ENCODE measurements at regions of chr5 and their contacts with region 1.

Region 1: DNA sequence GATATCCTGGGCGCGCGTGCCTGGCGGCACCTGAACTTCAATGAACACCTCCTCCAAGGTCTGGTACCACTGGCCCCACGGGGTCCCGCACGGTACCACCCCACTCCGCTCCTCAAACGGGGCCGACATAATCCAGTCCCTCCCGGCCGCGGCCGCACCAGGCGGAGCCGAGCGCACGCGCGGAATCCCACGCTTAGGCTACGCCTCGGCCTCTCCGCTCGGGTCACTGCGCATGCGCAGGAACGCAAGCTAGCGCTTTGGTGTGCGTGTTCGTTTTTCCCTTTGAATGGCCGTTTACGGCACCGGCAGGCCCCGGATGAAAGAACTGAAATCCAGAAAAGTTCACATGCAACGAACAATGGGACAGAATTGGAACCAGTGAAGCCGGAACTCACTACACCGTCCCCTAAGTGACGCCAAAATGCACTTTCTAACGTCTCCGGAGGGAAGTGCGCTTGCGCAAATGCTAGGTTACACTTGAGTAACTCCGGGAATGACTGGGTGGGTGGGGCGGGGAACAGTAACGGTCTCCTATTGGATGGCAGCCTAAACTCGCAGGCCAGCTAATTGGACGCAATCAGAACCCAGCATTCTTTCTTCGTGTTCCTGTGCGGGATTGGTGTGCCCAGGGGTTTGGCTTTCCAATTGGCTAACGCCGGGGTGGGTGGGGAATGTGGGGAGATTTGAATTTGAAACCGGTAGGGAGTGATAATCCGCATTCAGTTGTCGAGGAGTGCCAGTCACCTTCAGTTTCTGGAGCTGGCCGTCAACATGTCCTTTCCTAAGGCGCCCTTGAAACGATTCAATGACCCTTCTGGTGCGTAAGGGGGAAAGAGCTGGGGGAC is at the starts of genes HMMR and NUDCD2:
- DNase-seq: peak; percentile 96 to 98 (median 98)
- H3K4me3 ChIP-seq: peak within 1 kb of the TSS; percentile 76 to 98 (median 92)
- H3K4me3 Mint-ChIP-seq: peak within 1 kb of the TSS; percentile 92 to 96
- H3K27ac ChIP-seq: peak within 1 kb of the TSS; percentile 94 to 99
- H3K27ac Mint-ChIP-seq: peak within 1 kb of the TSS; percentile 97 to 100 (median 99)
- H3K4me1 ChIP-seq: peaks cover 24 to 33% of the 10 kb centered on the region in 2 donors
- H3K4me1 Mint-ChIP-seq: peaks cover 30% of the 10 kb centered on the region
- H3K27me3 ChIP-seq: no peaks in the 10 kb centered on the region
- H3K27me3 Mint-ChIP-seq: peaks cover 0 to 4% (median 0%) of the 10 kb centered on the region in 3 donors
- CTCF ChIP-seq: no peak
- polyA plus RNA-seq, gene HMMR: 0.29 TPM in 1 of 3 donors, not detected in the others
- polyA plus RNA-seq, gene NUDCD2: 3.4 to 23.6 (median 22.0) TPM

Region 2: DNA sequence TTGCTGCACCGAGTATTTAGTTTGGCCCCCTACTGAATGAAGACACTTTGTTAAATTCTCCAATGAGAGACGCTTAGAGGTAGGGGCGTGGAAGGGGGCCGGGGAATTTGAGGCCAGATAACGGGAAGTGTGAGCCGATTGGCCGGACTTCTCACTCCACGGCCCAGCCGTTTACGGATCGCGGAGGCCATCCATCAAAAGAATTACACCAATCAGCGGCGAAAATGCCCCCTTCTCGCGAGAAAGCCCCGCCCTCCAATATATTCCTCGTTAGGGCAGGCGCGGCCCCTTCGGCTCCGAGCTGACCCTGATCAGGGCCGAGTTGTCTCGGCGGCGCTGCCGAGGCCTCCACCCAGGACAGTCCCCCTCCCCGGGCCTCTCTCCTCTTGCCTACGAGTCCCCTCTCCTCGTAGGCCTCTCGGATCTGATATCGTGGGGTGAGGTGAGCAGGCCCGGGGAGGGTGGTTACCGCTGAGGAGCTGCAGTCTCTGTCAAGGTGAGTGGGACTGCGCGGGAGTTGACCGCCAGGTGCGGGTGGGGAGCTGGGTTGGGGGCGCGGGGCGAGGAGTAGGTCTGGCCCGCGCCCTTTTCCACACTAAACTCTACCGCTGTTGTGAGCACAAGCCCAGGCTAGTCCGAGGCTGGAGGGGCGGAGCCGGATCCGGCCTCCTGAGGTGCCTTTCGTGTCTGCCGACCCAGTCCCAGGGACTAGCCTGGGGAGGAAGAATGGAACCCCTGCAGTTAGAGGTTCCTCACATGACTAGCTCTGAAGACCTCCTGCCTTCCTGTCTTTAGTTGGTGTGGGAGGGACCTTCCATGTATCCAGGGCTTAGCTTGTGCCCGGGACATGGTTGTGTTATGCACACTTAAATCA is 22.6 kb before region 1 on chr5 and contains the start of gene CCNG1:
- intact Hi-C with region 1: loop called in 1 of 2 experiments (anchors 2 kb)
- DNase-seq: peak; percentile 90 to 95 (median 94)
- H3K4me3 ChIP-seq: peak within 1 kb of the TSS; percentile 49 to 94 (median 86)
- H3K4me3 Mint-ChIP-seq: peak within 1 kb of the TSS; percentile 85 to 91
- H3K27ac ChIP-seq: peak within 1 kb of the TSS; percentile 68 to 92
- H3K27ac Mint-ChIP-seq: peak within 1 kb of the TSS; percentile 80 to 92 (median 89)
- H3K4me1 ChIP-seq: peaks cover 17 to 28% of the 10 kb centered on the region in 2 donors
- H3K4me1 Mint-ChIP-seq: peaks cover 27% of the 10 kb centered on the region
- H3K27me3 ChIP-seq: no peaks in the 10 kb centered on the region
- H3K27me3 Mint-ChIP-seq: no peaks in the 10 kb centered on the region
- CTCF ChIP-seq: no peak
- polyA plus RNA-seq, gene CCNG1: 13.1 to 48.9 (median 46.0) TPM

Region 3: GRCh38 chr5:163447875-163448274 is 12.3 kb before region 1 on chr5:
- intact Hi-C with region 1: no loop called
- DNase-seq: no peak
- H3K4me3 ChIP-seq: no peak overlapping the region
- H3K4me3 Mint-ChIP-seq: no peak overlapping the region
- H3K27ac ChIP-seq: no peak overlapping the region
- H3K27ac Mint-ChIP-seq: peak overlapping the region in 1 of 7 donors; percentile 86
- H3K4me1 ChIP-seq: no peaks in the 10 kb centered on the region
- H3K4me1 Mint-ChIP-seq: no peaks in the 10 kb centered on the region
- H3K27me3 ChIP-seq: no peaks in the 10 kb centered on the region
- H3K27me3 Mint-ChIP-seq: no peaks in the 10 kb centered on the region
- CTCF ChIP-seq: no peak

Region 4: DNA sequence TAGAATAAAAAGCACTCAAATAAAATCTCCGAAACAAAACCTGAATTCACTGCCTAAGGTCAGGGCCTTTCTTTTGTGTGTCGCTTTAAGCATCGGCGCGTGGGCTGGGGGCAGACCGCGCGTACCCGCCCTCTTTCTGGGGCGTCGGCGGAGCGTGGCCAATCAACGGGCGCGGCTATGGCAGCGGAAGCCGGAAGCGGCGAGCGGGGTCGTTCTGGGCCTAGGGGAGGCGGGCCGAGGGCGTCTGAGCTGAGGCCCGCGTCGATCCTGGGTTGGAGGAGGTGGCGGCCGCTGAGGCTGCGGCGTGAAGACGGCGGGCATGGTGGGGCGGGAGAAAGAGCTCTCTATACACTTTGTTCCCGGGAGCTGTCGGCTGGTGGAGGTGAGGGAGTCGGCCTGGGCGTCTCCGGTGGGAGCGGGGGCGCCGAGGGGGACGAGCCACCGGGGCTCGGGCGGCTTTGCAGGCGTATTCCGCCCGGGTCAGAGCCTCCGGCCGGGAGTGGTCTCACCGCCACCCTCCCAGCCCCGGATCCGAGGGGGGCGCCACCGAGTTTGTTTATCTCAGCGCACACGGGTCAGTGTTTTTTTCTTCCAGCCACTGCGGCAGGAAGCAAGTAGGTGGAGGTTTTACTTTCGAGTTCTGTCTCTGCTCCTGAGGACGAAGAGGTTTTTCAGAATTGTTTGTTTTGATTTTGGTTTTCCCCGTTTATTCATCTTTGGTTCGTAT is 45.4 kb after region 1 on chr5 and contains the start of gene MAT2B:
- intact Hi-C with region 1: loop called (anchors 2 kb)
- DNase-seq: peak; percentile 90 to 91 (median 91)
- H3K4me3 ChIP-seq: peak within 1 kb of the TSS; percentile 62 to 99 (median 97)
- H3K4me3 Mint-ChIP-seq: peak within 1 kb of the TSS; percentile 89 to 97
- H3K27ac ChIP-seq: peak within 1 kb of the TSS; percentile 89 to 96
- H3K27ac Mint-ChIP-seq: peak within 1 kb of the TSS; percentile 94 to 99 (median 97)
- H3K4me1 ChIP-seq: peaks cover 39 to 62% of the 10 kb centered on the region in 2 donors
- H3K4me1 Mint-ChIP-seq: peaks cover 58% of the 10 kb centered on the region
- H3K27me3 ChIP-seq: no peaks in the 10 kb centered on the region
- H3K27me3 Mint-ChIP-seq: peaks cover 0 to 2% (median 0%) of the 10 kb centered on the region in 3 donors
- CTCF ChIP-seq: peak; percentile 53
- polyA plus RNA-seq, gene MAT2B: 34.8 to 165 (median 142) TPM

Measured in CD14-positive monocyte (primary cell).